ENCODE measurements at regions of chr10 and their contacts with region 1.

Region 1: DNA sequence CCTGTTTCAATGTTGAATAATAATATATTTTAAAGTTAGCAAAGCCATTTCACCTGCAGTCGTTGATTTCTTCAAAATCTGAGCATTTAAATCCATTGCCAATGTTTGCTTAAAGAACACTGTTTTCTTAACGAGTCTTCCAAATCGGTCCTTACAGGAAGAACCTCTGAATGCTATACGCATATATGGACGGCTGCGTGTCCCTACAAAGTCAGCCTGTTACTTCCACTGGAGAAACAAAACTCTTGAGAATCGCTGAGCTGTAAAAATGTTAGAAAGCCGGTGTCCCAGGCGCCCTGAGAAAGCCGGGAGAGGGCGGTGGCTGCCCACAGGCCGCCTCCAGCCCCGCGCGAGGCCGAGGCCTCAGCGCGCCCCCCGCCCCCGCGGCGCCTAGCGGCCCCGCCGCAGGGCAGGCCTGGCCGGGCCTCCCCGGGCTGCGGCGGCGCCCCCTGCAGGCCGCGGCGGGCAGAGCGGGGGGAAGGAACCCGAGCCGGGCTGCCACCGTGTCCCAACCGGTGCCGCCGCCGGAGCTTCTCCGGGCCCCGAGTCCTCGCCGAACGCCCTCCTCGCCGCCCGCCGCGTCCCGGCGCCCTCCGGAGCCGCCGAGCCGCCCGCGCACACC is at the start of gene FHIP2A:
- DNase-seq: peak; percentile 87
- CTCF ChIP-seq: peak; percentile 88

Region 2: DNA sequence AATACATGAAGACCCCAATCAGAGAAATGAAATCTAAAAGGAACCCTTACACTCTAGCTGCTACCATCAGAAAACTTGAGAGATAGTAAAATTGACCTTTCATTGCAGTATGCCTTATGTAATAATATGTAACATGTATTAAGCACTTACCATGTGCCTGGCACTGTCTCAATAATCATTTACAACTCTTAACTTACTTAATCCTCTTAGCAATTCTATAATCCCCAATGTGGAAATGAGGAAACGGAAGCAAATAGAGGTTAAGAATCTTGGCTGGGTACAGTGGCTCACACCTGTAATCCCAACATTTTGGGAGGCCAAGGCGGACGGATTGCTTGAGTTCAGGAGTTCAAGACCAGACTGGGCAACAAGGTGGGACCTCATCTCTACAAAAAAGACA is 29.6 kb before region 1 on chr10:
- CTCF ChIA-PET with region 1: no interaction called
- POLR2A ChIA-PET with region 1: no interaction called
- DNase-seq: no peak
- CTCF ChIP-seq: no peak

Region 3: DNA sequence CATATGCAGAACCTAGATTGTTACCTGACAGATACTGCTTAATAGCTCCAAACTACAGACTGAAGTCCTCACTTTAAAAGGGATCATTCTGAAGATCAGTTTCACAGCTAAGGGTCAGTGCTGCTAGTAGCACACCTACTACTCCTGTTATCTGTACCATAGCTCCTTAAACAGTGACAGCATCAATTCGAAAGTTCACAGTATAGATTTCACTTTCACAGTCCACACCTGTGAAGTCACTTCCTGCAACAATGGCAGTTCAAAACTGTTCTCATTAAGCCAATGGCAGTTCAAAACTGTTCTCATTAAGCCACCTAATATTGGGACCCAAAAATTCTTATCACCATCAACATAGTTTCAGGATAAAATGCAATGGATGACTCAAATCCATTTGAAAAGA is 10.5 kb before region 1 on chr10:
- CTCF ChIA-PET with region 1: interaction called, 34 read pairs
- POLR2A ChIA-PET with region 1: no interaction called
- DNase-seq: peak; percentile 81
- CTCF ChIP-seq: no peak

Measured in GM10248 (cell line).